CD4-positive, alpha-beta T cell (primary cell): ENCODE measurements at regions of chr19 and their contacts with region 1.

Region 1: GRCh38 chr19:37779127-37780005 is at the start of gene ZNF573:
- DNase-seq: peak; percentile 62 to 97 (median 77)
- ATAC-seq: peak; percentile 87
- H3K4me3 ChIP-seq: peak within 1 kb of the TSS; percentile 77
- H3K4me3 Mint-ChIP-seq: peak within 1 kb of the TSS; percentile 89
- H3K27ac ChIP-seq: peak within 1 kb of the TSS; percentile 88 to 94
- H3K27ac Mint-ChIP-seq: peak within 1 kb of the TSS; percentile 97
- H3K4me1 ChIP-seq: peaks cover 17% of the 10 kb centered on the region
- H3K4me1 Mint-ChIP-seq: peaks cover 46% of the 10 kb centered on the region
- H3K27me3 ChIP-seq: no peaks in the 10 kb centered on the region
- H3K27me3 Mint-ChIP-seq: no peaks in the 10 kb centered on the region
- CTCF ChIP-seq: no peak
- total RNA-seq, gene ZNF573: 4.6 to 5.0 TPM

Region 2: GRCh38 chr19:37172368-37173366 is 606.7 kb before region 1 on chr19 and contains the start of gene ZNF585A:
- CTCF ChIA-PET with region 1: no interaction called
- POLR2A ChIA-PET with region 1: no interaction called
- intact Hi-C with region 1: loop called in 1 of 2 experiments (anchors 5 kb)
- DNase-seq: peak; percentile 83 to 98 (median 89)
- ATAC-seq: peak; percentile 99
- H3K4me3 ChIP-seq: peak within 1 kb of the TSS; percentile 77
- H3K4me3 Mint-ChIP-seq: no peak within 1 kb of the TSS
- H3K27ac ChIP-seq: peak within 1 kb of the TSS; percentile 63 to 73
- H3K27ac Mint-ChIP-seq: no peak within 1 kb of the TSS
- H3K4me1 ChIP-seq: peaks cover 11% of the 10 kb centered on the region
- H3K4me1 Mint-ChIP-seq: no peaks in the 10 kb centered on the region
- H3K27me3 ChIP-seq: no peaks in the 10 kb centered on the region
- H3K27me3 Mint-ChIP-seq: no peaks in the 10 kb centered on the region
- CTCF ChIP-seq: no peak
- total RNA-seq, gene ZNF585A: 4.5 to 4.6 TPM

Region 3: DNA sequence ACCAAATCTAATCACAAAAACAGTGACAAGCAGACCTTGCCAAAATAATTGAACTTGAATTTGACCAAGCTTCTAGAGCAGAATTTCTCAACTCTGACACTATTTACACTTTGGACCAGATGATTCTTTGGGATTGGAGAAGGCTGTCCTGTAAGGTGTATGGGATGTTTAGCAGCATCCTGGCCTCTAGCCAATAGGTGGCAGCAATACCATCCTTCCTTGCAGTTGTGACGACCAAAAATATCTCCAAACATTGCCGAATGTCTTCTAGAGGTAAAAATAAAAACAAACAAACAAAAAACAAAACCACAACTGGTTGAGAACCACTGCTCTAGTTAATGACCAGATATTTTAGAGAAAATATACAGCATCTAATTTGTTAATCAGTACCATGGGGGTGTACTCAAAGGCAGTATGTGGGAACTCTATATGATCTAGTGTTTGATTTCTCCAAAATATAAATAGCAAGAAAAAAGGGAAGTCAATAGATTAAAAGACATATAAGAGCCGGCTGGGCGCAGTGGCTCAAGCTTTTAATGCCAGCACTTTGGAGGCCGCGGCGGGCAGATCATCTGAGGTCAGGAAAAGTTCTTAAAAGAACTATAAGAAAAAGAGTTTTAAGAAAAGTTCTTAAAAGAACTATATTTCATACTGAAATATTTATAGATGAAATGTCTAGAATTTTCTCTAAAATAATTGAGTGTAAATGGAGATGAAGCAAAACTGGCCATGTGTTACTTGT is 469.4 kb before region 1 on chr19:
- CTCF ChIA-PET with region 1: no interaction called
- POLR2A ChIA-PET with region 1: no interaction called
- intact Hi-C with region 1: loop called (anchors 10 kb)
- DNase-seq: peak in 7 of 14 experiments; percentile 9 to 68 (median 44)
- ATAC-seq: no peak
- H3K4me3 ChIP-seq: no peak overlapping the region
- H3K4me3 Mint-ChIP-seq: peak overlapping the region; percentile 50
- H3K27ac ChIP-seq: no peak overlapping the region
- H3K27ac Mint-ChIP-seq: no peak overlapping the region
- H3K4me1 ChIP-seq: peaks cover 12% of the 10 kb centered on the region
- H3K4me1 Mint-ChIP-seq: peaks cover 22% of the 10 kb centered on the region
- H3K27me3 ChIP-seq: peaks cover 0 to 7% of the 10 kb centered on the region in 2 experiments
- H3K27me3 Mint-ChIP-seq: peaks cover 11% of the 10 kb centered on the region
- CTCF ChIP-seq: peak; percentile 71

Region 4: GRCh38 chr19:37506387-37507166 is 272.8 kb before region 1 on chr19 and contains the start of gene ZNF793:
- CTCF ChIA-PET with region 1: no interaction called
- POLR2A ChIA-PET with region 1: interaction called, 13 read pairs
- intact Hi-C with region 1: loop called in 1 of 2 experiments (anchors 5 kb)
- DNase-seq: peak; percentile 68 to 92 (median 78)
- ATAC-seq: peak; percentile 85
- H3K4me3 ChIP-seq: peak within 1 kb of the TSS; percentile 68
- H3K4me3 Mint-ChIP-seq: no peak within 1 kb of the TSS
- H3K27ac ChIP-seq: peak within 1 kb of the TSS; percentile 88 to 92
- H3K27ac Mint-ChIP-seq: no peak within 1 kb of the TSS
- H3K4me1 ChIP-seq: peaks cover 20% of the 10 kb centered on the region
- H3K4me1 Mint-ChIP-seq: no peaks in the 10 kb centered on the region
- H3K27me3 ChIP-seq: no peaks in the 10 kb centered on the region
- H3K27me3 Mint-ChIP-seq: no peaks in the 10 kb centered on the region
- CTCF ChIP-seq: no peak
- total RNA-seq, gene ZNF793: 2.3 TPM

Region 5: DNA sequence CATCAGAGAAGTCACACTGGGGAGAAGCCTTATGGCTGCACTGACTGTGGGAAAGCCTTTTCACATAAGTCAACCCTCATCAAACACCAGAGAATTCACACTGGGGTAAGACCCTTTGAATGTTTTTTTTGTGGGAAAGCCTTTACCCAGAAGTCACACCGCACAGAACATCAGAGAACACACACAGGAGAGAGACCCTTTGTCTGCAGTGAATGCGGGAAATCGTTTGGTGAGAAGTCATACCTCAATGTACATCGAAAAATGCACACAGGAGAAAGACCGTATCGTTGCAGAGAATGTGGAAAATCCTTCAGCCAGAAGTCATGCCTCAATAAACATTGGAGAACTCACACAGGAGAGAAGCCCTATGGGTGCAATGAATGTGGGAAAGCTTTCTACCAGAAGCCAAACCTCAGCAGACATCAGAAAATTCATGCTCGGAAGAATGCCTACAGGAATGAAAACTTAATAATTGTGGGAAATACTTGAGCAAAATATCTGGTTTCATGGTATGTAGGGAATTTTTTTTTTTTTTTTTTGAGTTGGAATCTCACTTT is 241.9 kb before region 1 on chr19:
- CTCF ChIA-PET with region 1: no interaction called
- POLR2A ChIA-PET with region 1: no interaction called
- intact Hi-C with region 1: no loop called
- DNase-seq: no peak
- ATAC-seq: no peak
- H3K4me3 ChIP-seq: no peak overlapping the region
- H3K4me3 Mint-ChIP-seq: no peak overlapping the region
- H3K27ac ChIP-seq: no peak overlapping the region
- H3K27ac Mint-ChIP-seq: no peak overlapping the region
- H3K4me1 ChIP-seq: no peaks in the 10 kb centered on the region
- H3K4me1 Mint-ChIP-seq: no peaks in the 10 kb centered on the region
- H3K27me3 ChIP-seq: no peaks in the 10 kb centered on the region
- H3K27me3 Mint-ChIP-seq: no peaks in the 10 kb centered on the region
- CTCF ChIP-seq: no peak

Region 6: GRCh38 chr19:37655689-37656371 is 123.5 kb before region 1 on chr19:
- CTCF ChIA-PET with region 1: no interaction called
- POLR2A ChIA-PET with region 1: no interaction called
- intact Hi-C with region 1: loop called in 1 of 2 experiments (anchors 5 kb)
- DNase-seq: peak; percentile 57 to 91 (median 80)
- ATAC-seq: peak; percentile 77
- H3K4me3 ChIP-seq: peak overlapping the region; percentile 82
- H3K4me3 Mint-ChIP-seq: peak overlapping the region; percentile 99
- H3K27ac ChIP-seq: peak overlapping the region; percentile 83 to 91
- H3K27ac Mint-ChIP-seq: peak overlapping the region; percentile 98
- H3K4me1 ChIP-seq: peaks cover 14% of the 10 kb centered on the region
- H3K4me1 Mint-ChIP-seq: peaks cover 41% of the 10 kb centered on the region
- H3K27me3 ChIP-seq: no peaks in the 10 kb centered on the region
- H3K27me3 Mint-ChIP-seq: no peaks in the 10 kb centered on the region
- CTCF ChIP-seq: no peak

Region 7: GRCh38 chr19:37706052-37706605 is 73.2 kb before region 1 on chr19:
- CTCF ChIA-PET with region 1: no interaction called
- POLR2A ChIA-PET with region 1: no interaction called
- intact Hi-C with region 1: no loop called
- DNase-seq: no peak
- ATAC-seq: no peak
- H3K4me3 ChIP-seq: no peak overlapping the region
- H3K4me3 Mint-ChIP-seq: no peak overlapping the region
- H3K27ac ChIP-seq: no peak overlapping the region
- H3K27ac Mint-ChIP-seq: no peak overlapping the region
- H3K4me1 ChIP-seq: no peaks in the 10 kb centered on the region
- H3K4me1 Mint-ChIP-seq: no peaks in the 10 kb centered on the region
- H3K27me3 ChIP-seq: no peaks in the 10 kb centered on the region
- H3K27me3 Mint-ChIP-seq: no peaks in the 10 kb centered on the region
- CTCF ChIP-seq: no peak

Region 8: GRCh38 chr19:37719111-37719926 is 60.0 kb before region 1 on chr19 and contains the start of gene ZNF607:
- CTCF ChIA-PET with region 1: interaction called, 5 read pairs
- POLR2A ChIA-PET with region 1: interaction called, 8 read pairs
- intact Hi-C with region 1: loop called in 1 of 2 experiments (anchors 2 kb)
- DNase-seq: peak; percentile 55 to 92 (median 74)
- ATAC-seq: peak; percentile 75
- H3K4me3 ChIP-seq: peak within 1 kb of the TSS; percentile 87
- H3K4me3 Mint-ChIP-seq: peak within 1 kb of the TSS; percentile 91
- H3K27ac ChIP-seq: peak within 1 kb of the TSS; percentile 48 to 55
- H3K27ac Mint-ChIP-seq: peak within 1 kb of the TSS; percentile 79
- H3K4me1 ChIP-seq: peaks cover 15% of the 10 kb centered on the region
- H3K4me1 Mint-ChIP-seq: peaks cover 18% of the 10 kb centered on the region
- H3K27me3 ChIP-seq: no peaks in the 10 kb centered on the region
- H3K27me3 Mint-ChIP-seq: no peaks in the 10 kb centered on the region
- CTCF ChIP-seq: no peak
- total RNA-seq, gene ZNF607: 2.2 to 2.3 TPM